Heart left ventricle (tissue), 16 donors: ENCODE measurements at regions of chr4 and their contacts with region 1.

Region 1: DNA sequence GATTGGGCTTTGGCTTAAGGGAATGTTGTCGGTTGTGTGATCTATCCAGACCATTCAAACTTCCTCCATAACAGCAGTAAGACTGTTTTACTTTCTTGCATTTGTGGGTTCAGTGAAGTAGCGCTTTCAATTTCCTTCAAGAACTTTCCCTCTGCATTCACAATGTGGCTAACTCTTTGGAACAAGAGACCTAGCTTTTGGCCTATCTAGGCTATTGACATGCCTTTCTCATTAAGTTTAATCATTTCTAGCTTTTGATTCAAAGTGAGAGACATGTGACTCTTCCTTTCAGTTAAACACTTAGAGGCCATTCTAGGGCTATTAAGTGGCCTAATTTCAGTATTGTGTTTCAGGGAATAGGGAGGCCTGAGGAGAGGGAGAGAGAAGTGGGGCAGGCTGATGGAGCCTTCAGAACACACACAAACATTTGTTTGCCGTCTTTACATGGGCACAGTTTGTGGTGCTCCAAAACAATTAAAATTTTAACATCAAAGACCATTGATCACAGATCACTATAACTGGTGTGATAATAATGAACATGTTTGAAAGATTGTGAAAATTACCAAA is 34.1 kb downstream of the ADH5 start:
- DNase-seq: no peak
- ATAC-seq: no peak
- H3K4me3 ChIP-seq: no peak overlapping the region
- H3K27ac ChIP-seq: no peak overlapping the region
- H3K4me1 ChIP-seq: peaks cover 0 to 25% (median 4%) of the 10 kb centered on the region in 12 donors
- H3K27me3 ChIP-seq: no peaks in the 10 kb centered on the region
- CTCF ChIP-seq: no peak
- POLR2A ChIP-seq: no peak

Region 2: DNA sequence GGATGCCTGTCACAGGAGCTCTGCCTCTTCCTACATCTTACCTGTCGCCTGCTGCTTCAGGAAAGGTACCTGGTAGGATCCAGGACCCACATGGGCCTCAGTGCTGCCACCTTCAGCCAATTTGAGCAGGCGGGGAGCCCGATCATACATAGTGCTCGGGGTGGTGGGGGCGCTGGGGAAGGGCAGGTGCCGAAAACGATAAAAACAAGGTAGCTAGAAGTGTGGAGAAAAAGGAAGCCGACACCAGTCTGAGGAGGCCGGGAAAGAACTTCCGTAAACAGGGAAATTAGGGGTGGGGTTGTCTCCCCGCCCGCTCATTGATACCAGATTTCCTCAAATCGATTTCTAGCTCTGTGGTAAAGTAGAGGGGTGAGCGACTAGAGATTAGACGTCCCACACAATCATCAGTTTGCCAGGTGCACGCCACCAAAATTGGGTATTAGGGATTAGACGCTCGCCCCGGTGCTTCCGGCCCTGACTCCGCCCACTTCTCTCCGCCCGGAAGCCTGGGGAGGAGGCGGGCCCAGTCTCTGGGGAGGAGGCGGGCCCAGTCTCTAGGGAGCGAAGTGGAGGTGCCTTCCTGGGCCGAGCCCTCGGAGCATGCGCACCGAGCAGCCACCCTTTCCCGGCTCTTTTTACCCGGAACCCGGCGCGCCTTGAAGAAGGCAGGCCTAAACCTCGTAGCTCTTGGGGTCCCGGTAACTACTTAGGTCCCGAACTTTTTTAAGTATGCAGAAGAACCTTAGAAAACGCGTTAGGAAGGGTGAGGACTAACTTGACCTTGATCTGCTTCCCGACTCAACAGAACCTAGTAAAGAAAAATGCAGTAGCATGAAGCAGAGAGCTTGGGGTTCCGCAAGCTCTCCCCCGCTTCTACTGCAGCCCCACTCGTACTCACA is 911.3 kb before region 1 on chr4 and contains the start of gene STPG2:
- intact Hi-C with region 1: loop called in 2 of 10 experiments (anchors 10 kb)
- DNase-seq: peak; percentile 91 to 97 (median 96)
- ATAC-seq: peak; percentile 100
- H3K4me3 ChIP-seq: peak within 1 kb of the TSS; percentile 52 to 88 (median 72)
- H3K27ac ChIP-seq: peak within 1 kb of the TSS; percentile 33 to 91 (median 83)
- H3K4me1 ChIP-seq: peaks cover 0 to 9% (median 0%) of the 10 kb centered on the region in 12 donors
- H3K27me3 ChIP-seq: no peaks in the 10 kb centered on the region
- CTCF ChIP-seq: peak; percentile 7 to 60 (median 38)
- POLR2A ChIP-seq: peak in 1 of 2 donors; percentile 63
- total RNA-seq, gene STPG2: 0.16 to 0.71 (median 0.32) TPM in 7 of 9 donors, not detected in the others

Region 3: DNA sequence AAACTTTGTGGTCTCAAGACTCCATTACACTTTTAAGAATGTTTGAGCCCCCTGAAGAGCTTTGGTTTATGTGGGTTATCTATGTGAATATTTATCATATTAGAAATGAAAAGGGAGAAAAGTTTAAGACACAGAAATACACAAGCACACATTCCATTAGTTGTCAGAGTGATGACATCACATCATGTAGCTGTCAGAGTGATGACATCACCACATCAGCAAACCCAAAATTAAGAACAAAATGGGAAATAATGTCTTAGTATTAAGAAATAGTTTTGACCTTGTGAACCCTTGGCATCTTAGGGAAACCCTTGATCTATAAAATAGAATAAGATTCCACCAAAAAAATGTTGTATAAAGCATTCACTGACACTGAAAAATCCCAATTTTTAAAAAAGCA is 592.0 kb before region 1 on chr4:
- intact Hi-C with region 1: loop called in 6 of 10 experiments (anchors 5 to 10 kb)
- DNase-seq: no peak
- ATAC-seq: no peak
- H3K4me3 ChIP-seq: no peak overlapping the region
- H3K27ac ChIP-seq: no peak overlapping the region
- H3K4me1 ChIP-seq: peaks cover 0 to 5% (median 0%) of the 10 kb centered on the region in 12 donors
- H3K27me3 ChIP-seq: no peaks in the 10 kb centered on the region
- CTCF ChIP-seq: no peak
- POLR2A ChIP-seq: no peak

Region 4: GRCh38 chr4:98928505-98929340 is 125.8 kb before region 1 on chr4 and contains the start of gene EIF4E:
- intact Hi-C with region 1: loop called in 2 of 10 experiments (anchors 10 kb)
- DNase-seq: peak; percentile 97 to 99 (median 99)
- ATAC-seq: peak; percentile 94 to 96 (median 95)
- H3K4me3 ChIP-seq: peak within 1 kb of the TSS; percentile 57 to 99 (median 87)
- H3K27ac ChIP-seq: peak within 1 kb of the TSS; percentile 76 to 99 (median 93)
- H3K4me1 ChIP-seq: peaks cover 0 to 58% (median 13%) of the 10 kb centered on the region in 12 donors
- H3K27me3 ChIP-seq: no peaks in the 10 kb centered on the region
- CTCF ChIP-seq: peak in 8 of 12 donors; percentile 1 to 39 (median 19)
- POLR2A ChIP-seq: peak in 1 of 2 donors; percentile 45
- total RNA-seq, gene EIF4E: 49.3 to 93.2 (median 62.2) TPM

Region 5: GRCh38 chr4:98995183-98996055 is 59.1 kb before region 1 on chr4 and contains the start of gene METAP1:
- intact Hi-C with region 1: loop called in 9 of 10 experiments (anchors 1 to 5 kb)
- DNase-seq: peak; percentile 94 to 97 (median 96)
- ATAC-seq: peak; percentile 92 to 97 (median 96)
- H3K4me3 ChIP-seq: peak within 1 kb of the TSS; percentile 89 to 99 (median 96)
- H3K27ac ChIP-seq: peak within 1 kb of the TSS; percentile 88 to 96 (median 92)
- H3K4me1 ChIP-seq: peaks cover 0 to 26% (median 15%) of the 10 kb centered on the region in 12 donors
- H3K27me3 ChIP-seq: no peaks in the 10 kb centered on the region
- CTCF ChIP-seq: peak; percentile 32 to 80 (median 56)
- POLR2A ChIP-seq: peak; percentile 26 to 69
- total RNA-seq, gene METAP1: 51.8 to 71.4 (median 63.6) TPM